B cell (primary cell): ENCODE measurements at regions of chr15 and their contacts with region 1.

Region 1: GRCh38 chr15:34014556-34014955 is 24.4 kb downstream of the AVEN start:
- DNase-seq: no peak
- ATAC-seq: no peak
- H3K4me3 ChIP-seq: no peak overlapping the region
- H3K4me3 Mint-ChIP-seq: no peak overlapping the region
- H3K27ac ChIP-seq: no peak overlapping the region
- H3K27ac Mint-ChIP-seq: no peak overlapping the region
- H3K4me1 ChIP-seq: no peaks in the 10 kb centered on the region
- H3K4me1 Mint-ChIP-seq: peaks cover 3% of the 10 kb centered on the region
- H3K27me3 ChIP-seq: no peaks in the 10 kb centered on the region
- H3K27me3 Mint-ChIP-seq: no peaks in the 10 kb centered on the region
- CTCF ChIP-seq: no peak

Region 2: GRCh38 chr15:32651229-32651837 is 1363.2 kb before region 1 on chr15:
- CTCF ChIA-PET with region 1: no interaction called
- POLR2A ChIA-PET with region 1: no interaction called
- intact Hi-C with region 1: loop called (anchors 5 kb)
- DNase-seq: peak; percentile 57
- ATAC-seq: peak; percentile 89
- H3K4me3 ChIP-seq: no peak overlapping the region
- H3K4me3 Mint-ChIP-seq: no peak overlapping the region
- H3K27ac ChIP-seq: no peak overlapping the region
- H3K27ac Mint-ChIP-seq: no peak overlapping the region
- H3K4me1 ChIP-seq: no peaks in the 10 kb centered on the region
- H3K4me1 Mint-ChIP-seq: no peaks in the 10 kb centered on the region
- H3K27me3 ChIP-seq: no peaks in the 10 kb centered on the region
- H3K27me3 Mint-ChIP-seq: no peaks in the 10 kb centered on the region
- CTCF ChIP-seq: peak; percentile 88